Mammary epithelial cell (primary cell): ENCODE measurements at regions of chr5 and their contacts with region 1.

Region 1: DNA sequence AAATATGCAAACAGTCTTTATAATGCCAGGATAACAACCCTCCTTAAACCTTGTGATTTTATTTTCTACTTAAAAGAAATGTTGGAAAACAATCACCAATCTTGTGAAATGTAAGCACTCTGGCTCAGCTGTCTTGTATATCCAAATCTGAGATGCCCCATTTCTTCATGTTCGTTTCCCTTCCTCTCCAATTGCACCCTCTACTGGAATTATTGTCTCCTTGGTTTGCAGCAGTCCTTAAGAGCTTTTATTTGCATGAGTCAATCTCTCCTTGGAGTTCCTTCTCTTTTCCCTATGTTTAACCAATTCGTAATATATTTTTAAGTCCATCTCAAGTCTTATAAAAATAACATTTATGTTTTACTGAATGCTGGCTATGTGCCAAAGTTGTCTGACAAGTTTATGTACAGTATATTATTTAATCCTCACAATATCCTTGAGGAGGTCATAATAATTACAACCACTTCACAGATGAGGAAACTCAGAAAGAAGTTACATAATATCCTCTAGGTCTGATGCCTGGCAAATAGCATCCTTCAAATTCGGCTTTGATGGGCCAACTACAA is 362.0 kb upstream of the CDH10 start:
- DNase-seq: peak; percentile 5
- H3K4me3 ChIP-seq: no peak overlapping the region
- H3K27ac ChIP-seq: no peak overlapping the region
- H3K4me1 ChIP-seq: no peaks in the 10 kb centered on the region
- H3K27me3 ChIP-seq: no peaks in the 10 kb centered on the region
- CTCF ChIP-seq: peak in 1 of 2 donors; percentile 48

Region 2: GRCh38 chr5:24633712-24634325 is 373.0 kb before region 1 on chr5:
- CTCF ChIA-PET with region 1: no interaction called
- dilution Hi-C with region 1: no loop called
- in situ Hi-C with region 1: no loop called
- intact Hi-C with region 1: loop called (anchors 2 kb)
- DNase-seq: peak; percentile 8
- H3K4me3 ChIP-seq: no peak overlapping the region
- H3K27ac ChIP-seq: no peak overlapping the region
- H3K4me1 ChIP-seq: no peaks in the 10 kb centered on the region
- H3K27me3 ChIP-seq: no peaks in the 10 kb centered on the region
- CTCF ChIP-seq: peak; percentile 57 to 58

Region 3: DNA sequence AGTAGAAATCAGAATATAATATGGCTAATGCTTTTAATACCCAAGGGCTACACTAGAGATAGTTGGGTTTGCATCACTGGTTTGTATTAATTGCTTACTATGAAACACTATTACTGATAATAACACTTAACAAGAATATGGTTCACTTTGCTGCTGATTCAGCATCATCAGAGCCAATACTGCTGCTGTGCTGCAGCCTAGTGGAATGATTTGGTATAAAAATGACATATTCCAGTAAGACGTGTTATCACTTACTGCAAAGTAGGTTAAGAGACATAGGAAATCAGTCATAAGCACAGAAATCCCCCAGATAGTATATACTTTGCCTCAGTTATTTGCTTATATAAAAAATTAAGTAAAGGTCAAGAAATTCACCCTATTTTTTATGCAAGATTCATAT is 364.8 kb before region 1 on chr5:
- CTCF ChIA-PET with region 1: no interaction called
- dilution Hi-C with region 1: no loop called
- in situ Hi-C with region 1: no loop called
- intact Hi-C with region 1: loop called (anchors 2 kb)
- DNase-seq: peak; percentile 8
- H3K4me3 ChIP-seq: no peak overlapping the region
- H3K27ac ChIP-seq: no peak overlapping the region
- H3K4me1 ChIP-seq: no peaks in the 10 kb centered on the region
- H3K27me3 ChIP-seq: no peaks in the 10 kb centered on the region
- CTCF ChIP-seq: peak; percentile 72 to 76

Region 4: GRCh38 chr5:24735298-24735697 is 271.5 kb before region 1 on chr5:
- CTCF ChIA-PET with region 1: no interaction called
- dilution Hi-C with region 1: no loop called
- in situ Hi-C with region 1: no loop called
- intact Hi-C with region 1: no loop called
- DNase-seq: no peak
- H3K4me3 ChIP-seq: no peak overlapping the region
- H3K27ac ChIP-seq: no peak overlapping the region
- H3K4me1 ChIP-seq: no peaks in the 10 kb centered on the region
- H3K27me3 ChIP-seq: no peaks in the 10 kb centered on the region
- CTCF ChIP-seq: no peak

Region 5: GRCh38 chr5:24749701-24750100 is 257.1 kb before region 1 on chr5:
- CTCF ChIA-PET with region 1: interaction called, 3 read pairs
- dilution Hi-C with region 1: no loop called
- in situ Hi-C with region 1: no loop called
- intact Hi-C with region 1: loop called (anchors 2 kb)
- DNase-seq: no peak
- H3K4me3 ChIP-seq: no peak overlapping the region
- H3K27ac ChIP-seq: no peak overlapping the region
- H3K4me1 ChIP-seq: no peaks in the 10 kb centered on the region
- H3K27me3 ChIP-seq: no peaks in the 10 kb centered on the region
- CTCF ChIP-seq: no peak

Region 6: DNA sequence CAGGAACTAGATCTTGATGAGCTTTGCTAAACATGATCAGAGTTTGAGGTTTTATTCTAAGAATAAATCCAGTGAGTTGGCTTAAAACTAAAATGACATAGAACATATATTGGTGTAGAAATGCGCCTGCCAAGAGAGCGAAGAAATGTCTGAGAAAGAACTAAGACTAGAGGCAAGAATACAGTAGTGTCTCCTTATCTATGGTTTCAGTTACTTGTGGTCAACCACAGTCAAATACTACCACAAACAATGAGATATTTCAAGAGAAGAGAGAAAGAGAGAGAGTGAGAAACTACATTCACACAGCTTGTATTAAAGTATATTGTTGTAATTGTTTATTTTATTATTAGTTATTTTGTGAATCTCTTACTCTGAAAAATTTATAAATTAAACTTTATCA is 107.6 kb before region 1 on chr5:
- CTCF ChIA-PET with region 1: no interaction called
- dilution Hi-C with region 1: no loop called
- in situ Hi-C with region 1: no loop called
- intact Hi-C with region 1: no loop called
- DNase-seq: no peak
- H3K4me3 ChIP-seq: no peak overlapping the region
- H3K27ac ChIP-seq: no peak overlapping the region
- H3K4me1 ChIP-seq: no peaks in the 10 kb centered on the region
- H3K27me3 ChIP-seq: no peaks in the 10 kb centered on the region
- CTCF ChIP-seq: no peak